Activated CD8-positive, alpha-beta T cell treated with anti-CD3 and anti-CD28 coated beads for 36 hours (primary cell): ENCODE measurements at regions of chr20 and their contacts with region 1.

Region 1: GRCh38 chr20:38805502-38805957 is at the start of gene PPP1R16B:
- DNase-seq: peak; percentile 90
- ATAC-seq: peak; percentile 83
- H3K4me3 Mint-ChIP-seq: peak within 1 kb of the TSS; percentile 85
- H3K27ac Mint-ChIP-seq: peak within 1 kb of the TSS; percentile 99
- H3K4me1 Mint-ChIP-seq: peaks cover 51% of the 10 kb centered on the region
- H3K27me3 Mint-ChIP-seq: no peaks in the 10 kb centered on the region
- CTCF ChIP-seq: no peak
- total RNA-seq, gene PPP1R16B: 74.9 to 81.4 TPM

Region 2: GRCh38 chr20:38790200-38791053 is 15.1 kb before region 1 on chr20:
- CTCF ChIA-PET with region 1: interaction called, 15 read pairs
- POLR2A ChIA-PET with region 1: interaction called, 4 read pairs
- intact Hi-C with region 1: no loop called
- DNase-seq: peak; percentile 65
- ATAC-seq: peak; percentile 74
- H3K4me3 Mint-ChIP-seq: no peak overlapping the region
- H3K27ac Mint-ChIP-seq: no peak overlapping the region
- H3K4me1 Mint-ChIP-seq: peaks cover 17% of the 10 kb centered on the region
- H3K27me3 Mint-ChIP-seq: no peaks in the 10 kb centered on the region
- CTCF ChIP-seq: peak; percentile 72

Region 3: DNA sequence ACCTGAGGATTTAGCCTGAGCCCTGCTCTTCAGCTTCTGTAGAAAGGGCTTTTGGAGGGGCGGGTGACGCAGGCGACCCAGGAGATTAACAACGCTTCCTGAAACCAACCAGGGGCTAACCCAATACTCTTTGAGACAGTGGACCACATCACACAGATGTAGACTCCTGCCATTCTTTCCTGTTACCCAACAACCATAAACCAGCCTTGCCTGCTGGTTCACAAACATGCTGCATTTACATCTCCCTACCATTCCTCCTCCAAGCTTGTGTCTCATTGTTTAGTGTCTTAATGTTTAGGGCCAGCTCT is 28.3 kb after region 1 on chr20:
- CTCF ChIA-PET with region 1: interaction called, 3 read pairs
- POLR2A ChIA-PET with region 1: interaction called, 14 read pairs
- intact Hi-C with region 1: no loop called
- DNase-seq: peak; percentile 70
- ATAC-seq: peak; percentile 73
- H3K4me3 Mint-ChIP-seq: no peak overlapping the region
- H3K27ac Mint-ChIP-seq: peak overlapping the region; percentile 86
- H3K4me1 Mint-ChIP-seq: peaks cover 65% of the 10 kb centered on the region
- H3K27me3 Mint-ChIP-seq: no peaks in the 10 kb centered on the region
- CTCF ChIP-seq: no peak

Region 4: DNA sequence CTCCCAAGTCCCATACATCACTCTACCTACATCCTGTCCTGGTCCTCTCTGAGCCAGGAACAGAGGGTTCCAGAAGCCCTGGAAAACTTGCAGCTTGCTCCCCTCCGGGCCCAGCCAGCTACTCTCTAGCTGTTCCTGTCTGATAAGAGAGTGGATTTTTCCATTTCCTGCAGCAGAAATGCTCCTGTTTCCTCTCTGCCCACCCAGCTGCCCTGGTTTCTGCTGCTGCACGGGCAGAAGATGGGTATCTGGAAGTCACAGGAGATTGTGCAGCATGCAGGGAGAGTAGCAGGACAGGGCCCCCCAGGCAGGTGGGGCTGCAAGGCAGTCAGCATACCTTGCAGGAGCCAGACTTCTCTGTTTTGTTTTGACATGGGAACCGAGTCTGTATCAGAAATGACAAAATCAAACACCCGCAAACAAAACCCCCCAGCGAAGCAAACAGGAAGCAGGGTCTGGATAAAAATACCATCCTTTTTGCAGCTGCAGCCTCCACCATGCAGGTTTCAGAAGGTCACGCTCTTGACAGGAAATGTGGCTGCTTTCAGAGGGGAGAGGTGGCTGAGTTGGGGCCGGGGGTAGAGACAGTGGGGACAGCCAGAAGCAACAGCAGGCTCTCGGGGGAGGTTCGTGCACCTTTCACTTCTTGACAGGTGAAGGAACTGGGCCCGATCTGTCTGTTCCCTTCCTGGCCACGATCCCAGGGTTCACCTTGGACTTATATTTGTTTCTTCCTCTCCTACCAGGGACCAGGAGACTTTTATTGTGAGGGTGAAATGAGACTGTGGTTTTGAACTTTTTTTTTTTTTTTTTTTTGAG is 69.9 kb after region 1 on chr20:
- CTCF ChIA-PET with region 1: interaction called, 9 read pairs
- POLR2A ChIA-PET with region 1: interaction called, 25 read pairs
- intact Hi-C with region 1: loop called (anchors 5 kb)
- DNase-seq: peak; percentile 84
- ATAC-seq: peak; percentile 29
- H3K4me3 Mint-ChIP-seq: peak overlapping the region; percentile 67
- H3K27ac Mint-ChIP-seq: peak overlapping the region; percentile 96
- H3K4me1 Mint-ChIP-seq: peaks cover 89% of the 10 kb centered on the region
- H3K27me3 Mint-ChIP-seq: no peaks in the 10 kb centered on the region
- CTCF ChIP-seq: no peak

Region 5: DNA sequence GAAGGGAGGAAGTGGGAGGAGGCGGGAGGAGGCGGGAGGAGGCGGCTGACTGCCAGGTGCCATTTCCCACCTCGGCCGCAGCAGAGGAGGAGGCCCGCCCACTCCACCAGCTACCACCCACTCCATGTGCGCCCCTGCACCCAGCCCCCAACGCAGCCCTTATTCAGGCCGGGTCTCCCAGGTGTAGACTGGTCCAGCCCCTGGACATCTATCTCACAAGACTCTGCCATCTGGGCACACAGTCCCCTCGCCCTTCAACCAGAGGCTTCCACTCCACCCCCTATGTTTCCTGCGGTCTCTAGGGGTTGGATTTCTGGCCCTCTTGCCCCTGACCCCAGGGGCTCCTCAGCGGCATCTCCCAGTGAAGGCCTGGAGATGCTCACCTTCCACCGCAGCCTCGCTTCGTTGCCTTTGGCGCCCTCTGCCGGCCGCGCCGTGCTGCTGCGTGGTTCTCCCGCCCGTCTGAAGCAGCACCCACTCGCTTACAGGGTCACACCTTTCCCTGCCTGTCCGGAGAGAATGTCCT is 88.1 kb after region 1 on chr20:
- CTCF ChIA-PET with region 1: interaction called, 48 read pairs
- POLR2A ChIA-PET with region 1: interaction called, 10 read pairs
- intact Hi-C with region 1: loop called (anchors 5 kb)
- DNase-seq: peak; percentile 84
- ATAC-seq: peak; percentile 79
- H3K4me3 Mint-ChIP-seq: peak overlapping the region; percentile 29
- H3K27ac Mint-ChIP-seq: peak overlapping the region; percentile 85
- H3K4me1 Mint-ChIP-seq: peaks cover 52% of the 10 kb centered on the region
- H3K27me3 Mint-ChIP-seq: no peaks in the 10 kb centered on the region
- CTCF ChIP-seq: peak; percentile 94

Region 6: GRCh38 chr20:38962044-38962927 is 156.8 kb after region 1 on chr20 and contains the start of gene DHX35:
- CTCF ChIA-PET with region 1: no interaction called
- POLR2A ChIA-PET with region 1: no interaction called
- intact Hi-C with region 1: no loop called
- DNase-seq: peak; percentile 99
- ATAC-seq: peak; percentile 99
- H3K4me3 Mint-ChIP-seq: peak within 1 kb of the TSS; percentile 87
- H3K27ac Mint-ChIP-seq: peak within 1 kb of the TSS; percentile 93
- H3K4me1 Mint-ChIP-seq: peaks cover 20% of the 10 kb centered on the region
- H3K27me3 Mint-ChIP-seq: no peaks in the 10 kb centered on the region
- CTCF ChIP-seq: peak; percentile 18
- total RNA-seq, gene DHX35: 12.2 to 12.6 TPM